ENCODE measurements at regions of chr11 and their contacts with region 1.

Region 1: DNA sequence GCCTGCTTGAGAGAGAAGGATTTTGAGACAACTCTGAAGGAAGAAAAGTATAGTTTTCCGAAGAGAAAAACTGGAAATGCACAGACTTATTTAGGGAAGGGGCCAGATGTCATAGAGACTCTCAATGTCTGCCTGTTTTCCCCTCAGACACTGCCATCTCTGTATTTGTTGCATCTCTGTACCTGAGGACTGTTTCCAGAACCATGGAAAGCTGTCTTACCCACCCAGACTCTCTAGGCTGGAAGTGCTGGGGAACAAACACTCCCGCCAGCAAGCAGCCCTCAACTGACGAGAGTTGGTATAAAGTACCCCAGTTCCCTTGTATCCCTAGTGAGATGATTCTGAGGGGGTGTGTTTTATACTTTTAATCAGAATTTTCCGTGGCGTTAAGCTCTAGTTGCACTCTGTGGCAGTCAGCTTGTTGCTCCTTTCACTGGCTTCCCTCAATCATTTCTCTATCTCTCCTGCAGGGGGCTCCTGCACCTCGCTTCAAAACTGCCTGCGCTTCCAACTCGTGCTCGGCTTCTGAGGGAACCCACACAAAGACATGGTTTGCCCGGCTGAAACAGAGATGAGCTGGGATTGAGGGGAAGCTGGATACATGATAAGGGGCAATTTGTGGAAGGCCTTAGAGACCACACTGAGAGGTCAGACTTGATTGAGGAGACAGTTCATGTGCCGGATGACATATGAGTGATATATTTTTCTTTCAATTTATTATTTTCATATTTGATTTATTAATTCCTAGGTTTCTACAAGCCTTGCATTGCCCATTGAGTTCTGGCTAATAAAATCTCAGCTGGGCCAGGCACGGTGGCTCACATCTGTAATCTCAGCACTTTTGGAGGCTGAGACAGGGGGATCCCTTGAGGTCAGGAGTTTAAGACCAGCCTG is 36.9 kb upstream of the CLPB start:
- DNase-seq: peak; percentile 69
- CTCF ChIP-seq: peak; percentile 79

Region 2: GRCh38 chr11:72454791-72455190 is 16.5 kb before region 1 on chr11:
- CTCF ChIA-PET with region 1: interaction called, 20 read pairs
- POLR2A ChIA-PET with region 1: no interaction called
- DNase-seq: no peak
- CTCF ChIP-seq: no peak

Region 3: GRCh38 chr11:72483412-72484186 is 12.3 kb after region 1 on chr11:
- CTCF ChIA-PET with region 1: interaction called, 12 read pairs
- POLR2A ChIA-PET with region 1: no interaction called
- DNase-seq: no peak
- CTCF ChIP-seq: no peak

Region 4: DNA sequence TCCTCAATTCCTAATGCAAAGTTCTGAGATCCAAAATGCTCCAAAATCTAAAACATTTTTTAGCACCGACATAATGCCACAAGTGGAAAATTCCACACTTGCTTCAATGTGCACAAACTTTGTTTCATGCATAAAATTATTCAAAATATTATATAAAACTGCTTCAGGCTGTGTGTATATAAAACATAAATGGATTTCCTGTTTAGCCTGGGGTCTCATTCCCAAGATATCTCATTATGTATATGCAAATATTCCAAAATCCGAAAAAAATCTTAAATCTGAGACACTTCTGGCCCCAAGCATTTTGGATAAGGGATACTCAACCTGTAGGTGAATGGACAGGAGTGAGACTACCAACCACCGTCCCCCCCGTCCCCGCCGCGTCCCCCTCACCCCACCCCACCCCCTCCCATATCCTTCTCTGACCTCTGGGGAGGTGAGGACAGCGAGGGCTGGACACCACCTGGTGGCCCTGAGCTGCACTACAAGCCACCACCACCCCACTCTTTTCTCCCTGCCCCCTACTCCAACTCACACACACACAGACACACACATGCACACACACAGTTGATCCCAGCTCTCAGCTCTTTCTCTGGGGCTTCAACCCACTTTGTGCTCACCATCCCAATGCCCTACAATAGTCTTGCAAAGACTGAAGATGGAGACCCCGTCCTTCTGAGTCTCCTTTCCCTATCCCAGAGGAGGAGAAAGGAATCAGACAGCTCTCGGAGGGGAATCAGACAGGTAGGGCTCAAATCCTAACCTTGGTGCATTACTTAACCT is 102.0 kb after region 1 on chr11:
- CTCF ChIA-PET with region 1: interaction called, 25 read pairs
- POLR2A ChIA-PET with region 1: no interaction called
- DNase-seq: peak; percentile 70
- CTCF ChIP-seq: peak; percentile 62

Region 5: GRCh38 chr11:72585762-72586311 is 114.6 kb after region 1 on chr11:
- CTCF ChIA-PET with region 1: interaction called, 26 read pairs
- POLR2A ChIA-PET with region 1: no interaction called
- DNase-seq: peak; percentile 85
- CTCF ChIP-seq: peak; percentile 82

Region 6: DNA sequence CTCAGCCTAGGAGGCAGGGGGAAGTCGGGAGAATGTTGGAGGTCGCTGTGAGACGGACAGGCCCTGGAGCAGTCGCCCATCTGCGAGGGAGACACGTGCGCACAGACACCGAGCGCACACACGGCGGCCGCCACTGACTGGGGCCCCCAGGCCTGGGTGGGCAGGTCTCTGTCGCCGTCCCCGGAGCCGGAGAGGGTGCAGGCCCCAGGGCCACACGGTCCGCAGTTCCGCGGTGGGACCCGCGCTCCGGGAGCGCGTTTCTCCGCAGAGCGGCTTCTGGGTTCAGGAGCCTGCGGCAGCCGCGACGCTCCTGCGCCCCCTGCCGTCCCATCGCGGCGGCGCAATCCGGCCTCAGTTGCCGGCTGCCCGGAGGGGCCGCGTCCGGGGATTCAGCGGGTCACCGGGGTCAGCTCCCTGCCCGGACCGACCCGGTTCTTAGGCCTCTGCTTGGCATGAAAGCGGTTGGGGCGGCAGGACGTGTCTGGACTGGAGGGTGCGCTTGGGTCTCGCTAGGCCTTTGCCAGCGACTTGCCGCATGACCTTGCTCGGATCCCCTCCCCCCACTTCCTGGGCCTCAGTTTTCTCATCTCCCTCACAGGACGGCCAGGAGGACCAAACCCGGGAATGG is 171.7 kb after region 1 on chr11:
- CTCF ChIA-PET with region 1: interaction called, 23 read pairs
- POLR2A ChIA-PET with region 1: no interaction called
- DNase-seq: peak; percentile 90
- CTCF ChIP-seq: peak; percentile 83

Region 7: GRCh38 chr11:72831513-72832300 is 360.5 kb after region 1 on chr11:
- CTCF ChIA-PET with region 1: no interaction called
- POLR2A ChIA-PET with region 1: no interaction called
- DNase-seq: no peak
- CTCF ChIP-seq: peak; percentile 87